Calu3 (cell line): ENCODE measurements at regions of chr11 and their contacts with region 1.

Region 1: GRCh38 chr11:66418168-66418985 is 2.5 kb upstream of the NPAS4 start:
- DNase-seq: peak; percentile 77
- H3K4me3 Mint-ChIP-seq: no peak overlapping the region
- H3K27ac Mint-ChIP-seq: no peak overlapping the region
- H3K4me1 Mint-ChIP-seq: peaks cover 21% of the 10 kb centered on the region
- H3K27me3 Mint-ChIP-seq: peaks cover 77% of the 10 kb centered on the region
- CTCF ChIP-seq: peak; percentile 66

Region 2: DNA sequence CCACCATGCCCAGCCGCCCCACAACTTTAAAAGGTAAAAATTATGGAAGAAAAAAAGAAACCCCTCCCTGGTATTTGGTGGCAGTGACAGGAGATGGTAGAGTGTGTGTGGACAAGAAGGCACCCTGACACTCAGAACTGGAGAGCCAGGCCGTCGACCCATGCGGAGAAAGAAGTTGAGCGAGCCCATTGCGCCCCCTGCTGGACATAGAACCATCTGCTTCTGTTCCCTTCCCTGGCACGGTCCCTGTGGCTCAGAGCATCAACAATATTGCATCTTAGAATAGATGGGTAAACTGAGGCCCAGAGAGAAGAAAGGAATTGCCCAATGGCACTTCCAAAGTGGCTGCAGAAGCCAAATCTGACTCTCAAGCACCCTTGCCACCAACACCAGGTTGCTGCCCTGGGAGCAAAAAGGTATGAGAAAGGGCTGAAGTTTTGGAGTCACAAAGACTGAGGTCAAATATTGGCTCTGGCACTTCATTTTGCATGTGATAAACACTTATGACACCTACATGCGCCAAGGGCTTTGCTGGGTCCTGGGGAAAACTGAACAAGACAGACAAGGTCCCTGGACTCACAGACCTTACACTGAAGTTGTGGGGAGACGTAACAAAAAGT is 11.7 kb after region 1 on chr11:
- CTCF ChIA-PET with region 1: interaction called, 16 read pairs
- intact Hi-C with region 1: no loop called
- DNase-seq: peak; percentile 79
- H3K4me3 Mint-ChIP-seq: no peak overlapping the region
- H3K27ac Mint-ChIP-seq: no peak overlapping the region
- H3K4me1 Mint-ChIP-seq: no peaks in the 10 kb centered on the region
- H3K27me3 Mint-ChIP-seq: peaks cover 11% of the 10 kb centered on the region
- CTCF ChIP-seq: peak; percentile 89

Region 3: GRCh38 chr11:66438504-66439466 is 20.4 kb after region 1 on chr11 and contains the start of gene MRPL11:
- CTCF ChIA-PET with region 1: interaction called, 10 read pairs
- intact Hi-C with region 1: no loop called
- DNase-seq: peak; percentile 93
- H3K4me3 Mint-ChIP-seq: peak within 1 kb of the TSS; percentile 86
- H3K27ac Mint-ChIP-seq: peak within 1 kb of the TSS; percentile 87
- H3K4me1 Mint-ChIP-seq: no peaks in the 10 kb centered on the region
- H3K27me3 Mint-ChIP-seq: peaks cover 20% of the 10 kb centered on the region
- CTCF ChIP-seq: peak; percentile 59
- total RNA-seq, gene MRPL11: 76.1 and 79.6 TPM in 2 replicates